ENCODE measurements at regions of chr3 and their contacts with region 1.

Region 1: GRCh38 chr3:32143849-32144757 is 37.7 kb downstream of the GPD1L start:
- DNase-seq: peak in 4 of 10 donors; percentile 30 to 66 (median 40)
- H3K4me3 ChIP-seq: no peak overlapping the region
- H3K27ac ChIP-seq: peak overlapping the region in 2 of 59 donors; percentile 11 to 23
- H3K27me3 ChIP-seq: no peaks in the 10 kb centered on the region
- CTCF ChIP-seq: peak; percentile 75 to 94 (median 86)

Region 2: GRCh38 chr3:32018757-32019564 is 125.1 kb before region 1 on chr3:
- intact Hi-C with region 1: loop called (anchors 2 to 5 kb)
- DNase-seq: no peak
- H3K4me3 ChIP-seq: no peak overlapping the region
- H3K27ac ChIP-seq: no peak overlapping the region
- H3K27me3 ChIP-seq: no peaks in the 10 kb centered on the region
- CTCF ChIP-seq: peak; percentile 56 to 92 (median 80)

Region 3: GRCh38 chr3:32062950-32063582 is 81.0 kb before region 1 on chr3:
- intact Hi-C with region 1: no loop called
- DNase-seq: no peak
- H3K4me3 ChIP-seq: no peak overlapping the region
- H3K27ac ChIP-seq: no peak overlapping the region
- H3K27me3 ChIP-seq: no peaks in the 10 kb centered on the region
- CTCF ChIP-seq: no peak

Region 4: DNA sequence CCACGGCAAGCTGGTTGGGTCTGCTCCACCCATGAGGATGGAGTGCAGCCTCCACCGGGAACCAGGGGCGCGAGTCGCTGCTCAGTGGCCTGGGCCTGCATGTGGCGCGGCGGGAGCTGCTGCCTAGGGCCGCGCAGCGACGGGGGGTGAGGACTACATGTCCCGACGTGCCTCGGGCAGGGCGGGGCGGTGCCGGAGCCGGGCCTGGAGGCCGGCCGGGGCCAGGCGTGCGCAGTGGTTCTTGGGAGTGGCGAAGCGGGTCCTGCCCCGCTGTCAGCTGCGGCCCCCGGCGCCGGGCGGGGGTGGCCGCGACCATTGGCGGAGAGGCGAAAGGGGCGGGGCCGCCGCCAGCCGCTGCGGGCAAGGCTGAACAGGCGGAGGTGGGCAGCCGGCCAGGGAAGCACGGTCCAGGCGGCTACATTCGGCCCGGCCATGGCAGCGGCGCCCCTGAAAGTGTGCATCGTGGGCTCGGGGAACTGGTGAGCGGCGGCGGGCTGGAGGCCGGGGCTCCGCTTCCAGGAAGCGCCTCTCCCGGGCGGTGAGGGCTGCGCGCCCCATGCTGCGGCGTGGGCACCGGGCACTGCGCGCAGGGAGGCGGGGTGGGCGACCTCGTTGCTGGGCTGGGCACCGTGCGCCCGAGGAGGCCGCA is 37.7 kb before region 1 on chr3 and contains the start of gene GPD1L:
- intact Hi-C with region 1: loop called (anchors 2 to 5 kb)
- DNase-seq: peak; percentile 90 to 99 (median 95)
- H3K4me3 ChIP-seq: peak within 1 kb of the TSS; percentile 60 to 96 (median 84)
- H3K27ac ChIP-seq: peak within 1 kb of the TSS in 57 of 59 donors; percentile 3 to 92 (median 79)
- H3K27me3 ChIP-seq: no peaks in the 10 kb centered on the region
- CTCF ChIP-seq: peak in 39 of 56 donors; percentile 4 to 59 (median 31)
- total RNA-seq, gene GPD1L: 32.5 to 90.3 (median 61.9) TPM

Measured in dorsolateral prefrontal cortex (tissue), 120 donors.